Spleen (tissue), 13 donors: ENCODE measurements at regions of chr4 and their contacts with region 1.

Region 1: DNA sequence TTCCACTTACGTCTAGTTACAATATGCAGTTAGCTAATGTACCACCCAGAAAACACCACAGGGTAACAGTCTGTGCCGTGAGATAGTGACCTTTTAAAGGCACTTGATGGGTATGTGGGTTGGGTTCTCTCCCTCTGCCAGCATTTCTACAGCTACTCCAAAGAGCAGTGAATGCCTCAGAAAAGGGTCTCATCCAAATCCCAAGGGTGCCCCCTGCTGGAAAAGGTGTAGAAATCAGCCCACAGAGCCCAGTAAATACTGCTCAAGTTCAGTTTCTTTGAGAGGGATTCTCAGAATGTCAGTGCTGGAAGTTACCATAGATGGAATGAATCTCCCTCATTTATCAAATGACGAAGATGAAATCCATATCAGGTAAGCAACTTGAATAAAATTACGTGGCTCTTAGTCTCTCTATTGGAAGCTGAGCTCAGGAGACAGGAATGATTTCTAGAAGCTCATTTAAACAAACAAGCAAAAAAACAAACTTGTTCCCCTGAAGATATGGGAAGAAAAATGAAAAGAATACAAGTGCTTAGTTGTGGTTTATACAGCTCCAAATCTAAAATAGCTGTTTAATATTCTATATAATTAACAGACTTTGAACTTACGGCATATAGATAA is 9.5 kb downstream of the RNF175 start:
- DNase-seq: no peak
- H3K4me3 ChIP-seq: no peak overlapping the region
- H3K27ac ChIP-seq: no peak overlapping the region
- H3K4me1 ChIP-seq: peaks cover 0 to 17% (median 0%) of the 10 kb centered on the region in 6 donors
- H3K27me3 ChIP-seq: no peaks in the 10 kb centered on the region
- CTCF ChIP-seq: peak; percentile 29 to 79 (median 65)
- POLR2A ChIP-seq: no peak

Region 2: GRCh38 chr4:153153339-153153871 is 596.9 kb before region 1 on chr4:
- intact Hi-C with region 1: no loop called
- DNase-seq: peak; percentile 87
- H3K4me3 ChIP-seq: peak overlapping the region; percentile 41 to 81 (median 62)
- H3K27ac ChIP-seq: peak overlapping the region in 7 of 8 donors; percentile 54 to 84 (median 74)
- H3K4me1 ChIP-seq: peaks cover 16 to 41% (median 31%) of the 10 kb centered on the region in 6 donors
- H3K27me3 ChIP-seq: peaks cover 0 to 50% (median 8%) of the 10 kb centered on the region in 7 donors
- CTCF ChIP-seq: no peak
- POLR2A ChIP-seq: no peak

Region 3: GRCh38 chr4:153344131-153345010 is 405.9 kb before region 1 on chr4 and contains the start of gene MND1:
- intact Hi-C with region 1: loop called (anchors 10 kb)
- DNase-seq: peak; percentile 96
- H3K4me3 ChIP-seq: peak within 1 kb of the TSS; percentile 75 to 99 (median 96)
- H3K27ac ChIP-seq: peak within 1 kb of the TSS in 5 of 8 donors; percentile 13 to 49 (median 31)
- H3K4me1 ChIP-seq: peaks cover 7 to 47% (median 28%) of the 10 kb centered on the region in 6 donors
- H3K27me3 ChIP-seq: no peaks in the 10 kb centered on the region
- CTCF ChIP-seq: peak; percentile 59 to 98 (median 92)
- POLR2A ChIP-seq: no peak
- total RNA-seq, gene MND1: 0.76 to 4.9 (median 1.8) TPM

Region 4: GRCh38 chr4:153634738-153635353 is 115.5 kb before region 1 on chr4:
- intact Hi-C with region 1: loop called (anchors 10 kb)
- DNase-seq: no peak
- H3K4me3 ChIP-seq: no peak overlapping the region
- H3K27ac ChIP-seq: peak overlapping the region in 2 of 8 donors; percentile 5 to 41
- H3K4me1 ChIP-seq: peaks cover 0 to 5% (median 0%) of the 10 kb centered on the region in 6 donors
- H3K27me3 ChIP-seq: no peaks in the 10 kb centered on the region
- CTCF ChIP-seq: peak; percentile 31 to 72 (median 60)
- POLR2A ChIP-seq: no peak